ENCODE measurements at regions of chr11 and their contacts with region 1.

Region 1: DNA sequence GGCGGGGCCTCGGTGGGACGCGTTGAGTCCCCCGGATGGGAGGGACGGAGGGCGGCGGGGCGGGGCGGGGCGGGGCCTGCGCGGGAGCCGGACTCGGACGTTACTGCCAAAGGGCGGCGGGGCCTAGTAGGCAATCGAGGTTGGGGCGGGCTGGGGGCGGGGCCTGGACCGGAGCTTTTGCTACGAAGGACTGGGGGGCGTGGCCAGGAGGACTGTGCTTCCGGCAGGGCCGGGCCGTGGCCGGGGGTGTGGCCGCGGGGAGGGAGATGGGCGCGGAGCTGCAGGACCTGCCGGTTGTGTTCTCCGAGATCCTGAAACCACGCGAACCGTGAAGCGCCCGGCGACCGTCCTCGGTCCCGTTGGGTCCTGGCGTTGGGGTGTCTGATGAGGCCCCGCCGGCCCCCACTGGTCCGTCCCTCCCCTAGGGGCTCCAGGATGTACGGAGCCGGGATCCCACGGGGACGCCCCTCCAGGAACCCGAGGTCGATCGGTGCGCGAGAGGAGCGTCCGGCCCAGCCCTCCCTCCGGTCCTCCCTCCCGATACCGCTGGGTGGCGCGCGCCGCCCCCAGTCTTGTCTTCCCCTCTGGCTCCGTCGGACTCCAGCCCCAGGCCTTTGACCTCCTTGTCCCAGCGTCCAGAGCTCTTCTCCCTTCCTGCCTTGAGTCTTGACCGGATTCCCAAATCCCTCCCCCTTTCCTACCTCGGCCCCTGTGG is 648 bp upstream of the NUDT8 start:
- DNase-seq: peak; percentile 99
- ATAC-seq: peak; percentile 76
- H3K4me3 Mint-ChIP-seq: peak overlapping the region; percentile 76
- H3K27ac Mint-ChIP-seq: peak overlapping the region; percentile 87
- H3K4me1 Mint-ChIP-seq: peaks cover 13% of the 10 kb centered on the region
- H3K27me3 Mint-ChIP-seq: no peaks in the 10 kb centered on the region

Region 2: DNA sequence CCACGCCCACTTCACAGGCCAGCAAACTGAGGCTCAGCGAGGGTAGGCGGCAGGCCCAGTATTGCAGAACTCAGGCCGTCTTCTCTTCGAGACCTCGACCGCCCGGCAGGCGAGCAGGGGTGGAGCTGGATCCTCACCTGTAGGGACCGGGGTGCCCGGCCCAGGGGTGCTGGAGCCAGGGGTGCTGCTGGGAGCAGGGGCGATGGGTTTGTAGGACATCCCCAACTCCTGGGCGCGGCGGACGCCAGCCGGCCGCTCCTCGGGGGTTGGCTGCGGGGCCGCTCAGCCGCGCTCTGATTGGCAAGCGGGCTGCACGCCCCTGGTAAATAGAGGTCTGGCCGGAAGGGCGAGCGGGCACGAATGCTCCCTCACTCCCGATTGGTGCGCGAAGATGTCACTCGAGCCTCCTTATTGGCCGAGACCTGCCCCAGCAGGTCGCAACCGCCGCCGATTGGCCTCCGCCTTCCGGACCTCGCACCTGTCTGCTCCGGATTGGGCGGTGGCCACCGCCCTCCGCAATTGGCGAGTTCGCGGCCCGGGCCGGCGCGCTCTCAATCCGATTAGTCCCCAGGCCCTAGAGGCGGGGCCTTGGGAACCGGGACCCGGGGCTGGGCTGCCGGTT is 122.4 kb before region 1 on chr11 and contains the start of gene CDK2AP2:
- CTCF ChIA-PET with region 1: no interaction called
- DNase-seq: peak; percentile 100
- ATAC-seq: peak; percentile 80
- H3K4me3 Mint-ChIP-seq: peak within 1 kb of the TSS; percentile 92
- H3K27ac Mint-ChIP-seq: peak within 1 kb of the TSS; percentile 94
- H3K4me1 Mint-ChIP-seq: peaks cover 43% of the 10 kb centered on the region
- H3K27me3 Mint-ChIP-seq: peaks cover 14% of the 10 kb centered on the region
- total RNA-seq, gene CDK2AP2: 95.2 to 104 TPM

Region 3: GRCh38 chr11:67606492-67607201 is 23.7 kb before region 1 on chr11 and contains the start of gene NDUFV1:
- CTCF ChIA-PET with region 1: interaction called, 111 read pairs
- DNase-seq: peak; percentile 98
- ATAC-seq: peak; percentile 100
- H3K4me3 Mint-ChIP-seq: peak within 1 kb of the TSS; percentile 88
- H3K27ac Mint-ChIP-seq: peak within 1 kb of the TSS; percentile 90
- H3K4me1 Mint-ChIP-seq: peaks cover 22% of the 10 kb centered on the region
- H3K27me3 Mint-ChIP-seq: peaks cover 7% of the 10 kb centered on the region
- total RNA-seq, gene NDUFV1: 239 to 252 TPM

Region 4: DNA sequence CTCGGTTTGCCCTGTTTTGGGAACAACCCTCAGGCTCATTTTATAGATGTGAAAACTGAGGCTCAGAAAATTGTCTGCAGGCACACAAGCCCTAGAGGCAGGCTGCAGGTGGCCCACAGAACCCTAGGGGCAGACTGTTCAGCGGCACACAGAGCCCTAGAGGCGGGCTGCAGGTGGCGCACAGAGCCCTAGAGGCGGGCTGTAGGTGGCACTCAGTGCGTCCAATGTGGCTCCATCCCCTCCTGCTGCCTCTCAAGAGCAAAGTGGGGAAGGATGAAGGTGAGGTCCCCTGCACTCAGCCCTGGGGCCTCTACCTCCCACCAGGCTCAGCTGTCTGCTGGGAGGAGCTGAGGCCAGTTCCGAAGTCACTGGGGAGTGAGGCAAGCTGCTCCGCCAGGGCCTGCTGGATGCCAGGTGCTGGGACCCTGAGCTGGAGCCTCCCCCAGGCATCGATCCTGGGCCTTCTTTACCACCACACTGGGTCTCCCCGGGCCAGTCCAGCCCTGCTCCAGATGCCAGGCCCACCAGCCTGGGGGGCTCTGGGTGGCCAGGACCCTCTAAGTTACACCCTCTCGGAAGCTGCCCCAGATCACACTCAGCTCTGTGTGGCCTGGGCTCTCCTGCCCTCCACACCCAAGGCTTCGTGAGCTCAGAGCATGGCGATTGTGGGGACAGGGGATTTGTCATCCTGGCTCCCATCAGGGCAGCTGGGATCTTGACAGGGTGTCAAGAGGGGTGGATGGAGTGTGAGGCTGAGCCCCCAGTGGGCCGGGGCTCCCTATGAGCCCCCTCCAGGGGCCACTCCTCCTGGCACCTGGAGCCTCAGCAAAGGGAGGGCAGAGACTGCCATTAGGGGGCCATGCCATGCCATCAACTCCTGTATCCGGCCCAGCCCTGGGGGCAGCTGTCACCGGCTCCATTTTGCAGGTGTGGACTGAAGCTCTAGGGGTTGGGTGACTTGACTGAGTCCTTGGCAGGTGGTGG is 18.0 kb after region 1 on chr11:
- CTCF ChIA-PET with region 1: interaction called, 157 read pairs
- DNase-seq: peak; percentile 73
- ATAC-seq: peak; percentile 57
- H3K4me3 Mint-ChIP-seq: no peak overlapping the region
- H3K27ac Mint-ChIP-seq: peak overlapping the region; percentile 89
- H3K4me1 Mint-ChIP-seq: peaks cover 55% of the 10 kb centered on the region
- H3K27me3 Mint-ChIP-seq: no peaks in the 10 kb centered on the region

Region 5: GRCh38 chr11:67691149-67691548 is 60.8 kb after region 1 on chr11:
- CTCF ChIA-PET with region 1: interaction called, 25 read pairs
- DNase-seq: no peak
- ATAC-seq: no peak
- H3K4me3 Mint-ChIP-seq: no peak overlapping the region
- H3K27ac Mint-ChIP-seq: no peak overlapping the region
- H3K4me1 Mint-ChIP-seq: peaks cover 13% of the 10 kb centered on the region
- H3K27me3 Mint-ChIP-seq: peaks cover 40% of the 10 kb centered on the region